Mammary epithelial cell (primary cell): ENCODE measurements at regions of chr7 and their contacts with region 1.

Region 1: GRCh38 chr7:136009488-136010079 is 32.4 kb upstream of the MTPN start:
- DNase-seq: peak; percentile 17
- H3K4me3 ChIP-seq: no peak overlapping the region
- H3K27ac ChIP-seq: no peak overlapping the region
- H3K4me1 ChIP-seq: no peaks in the 10 kb centered on the region
- H3K27me3 ChIP-seq: no peaks in the 10 kb centered on the region
- CTCF ChIP-seq: peak; percentile 56 to 58

Region 2: DNA sequence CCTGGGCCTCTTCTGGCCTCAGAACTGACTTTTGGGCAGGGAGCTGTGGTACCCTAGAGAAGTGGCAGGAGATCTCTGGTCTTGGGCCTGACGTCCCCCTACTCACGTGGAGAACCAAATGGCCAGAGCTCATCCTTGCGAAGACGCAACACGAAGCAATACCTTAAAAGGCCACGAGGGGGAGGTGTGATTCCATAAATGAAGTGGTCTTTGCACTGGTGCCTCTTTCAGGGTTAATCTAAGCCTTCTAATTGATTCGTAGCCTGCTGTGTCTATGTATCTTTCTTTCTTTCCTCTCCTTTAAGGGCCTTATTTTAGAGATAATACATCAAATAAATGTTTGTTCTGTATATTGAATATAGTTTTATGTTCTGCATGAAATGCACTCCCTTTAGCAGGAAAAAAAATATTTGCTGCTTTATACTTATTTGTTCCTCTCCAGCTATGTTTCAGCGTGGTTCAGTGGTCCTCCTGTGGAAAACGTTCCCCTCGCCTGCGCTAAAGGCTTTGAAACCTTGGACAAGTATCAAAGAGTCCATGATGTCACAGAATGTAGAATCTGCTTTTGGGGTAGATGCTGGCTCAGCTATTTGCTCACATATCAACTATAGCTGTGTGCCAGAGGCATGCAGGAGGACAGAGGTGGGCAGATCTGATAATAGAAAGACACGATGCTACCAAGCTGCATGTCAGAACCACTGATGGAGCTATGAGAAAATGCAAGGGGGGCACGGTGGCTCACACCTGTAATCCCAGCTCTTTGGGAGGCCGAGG is 734.9 kb before region 1 on chr7:
- CTCF ChIA-PET with region 1: no interaction called
- dilution Hi-C with region 1: no loop called
- in situ Hi-C with region 1: no loop called
- intact Hi-C with region 1: loop called (anchors 10 kb)
- DNase-seq: peak; percentile 57
- H3K4me3 ChIP-seq: no peak overlapping the region
- H3K27ac ChIP-seq: no peak overlapping the region
- H3K4me1 ChIP-seq: no peaks in the 10 kb centered on the region
- H3K27me3 ChIP-seq: no peaks in the 10 kb centered on the region
- CTCF ChIP-seq: peak; percentile 80 to 82

Region 3: DNA sequence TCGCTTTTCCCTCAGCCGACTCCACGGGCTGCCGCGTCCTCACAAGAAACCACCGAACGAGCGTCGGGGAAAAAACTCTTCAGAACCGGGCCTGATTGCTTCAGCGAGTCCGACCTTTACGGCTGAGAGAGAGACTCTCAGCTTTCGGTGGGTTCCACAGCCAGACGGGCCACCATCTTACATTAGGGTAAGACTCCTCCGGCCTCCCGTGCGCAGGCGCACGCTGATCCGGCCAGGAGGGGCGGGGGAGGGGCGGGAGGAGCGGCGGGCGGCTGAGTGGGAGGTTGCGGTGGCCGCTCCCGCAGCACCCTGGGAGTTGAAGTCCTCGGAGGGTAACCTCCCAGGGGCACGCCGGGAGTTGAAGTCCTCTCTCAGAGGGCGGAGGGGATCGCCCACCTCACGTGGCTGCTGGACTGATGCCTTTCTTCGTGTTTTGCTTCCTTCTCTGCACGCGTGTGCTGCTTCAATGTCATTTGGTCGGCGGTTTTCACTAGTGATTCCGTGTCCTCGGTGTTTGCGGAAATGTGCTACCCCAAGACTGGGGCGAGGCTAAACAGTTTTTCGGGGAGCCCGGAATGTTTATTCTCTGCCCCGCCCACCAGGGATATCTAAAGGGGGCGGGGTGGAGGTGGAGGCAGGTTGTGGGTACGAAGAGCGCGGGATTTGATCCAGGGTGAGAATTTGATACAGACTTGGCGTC is 499.5 kb before region 1 on chr7 and contains the start of gene CNOT4:
- CTCF ChIA-PET with region 1: no interaction called
- dilution Hi-C with region 1: no loop called
- in situ Hi-C with region 1: no loop called
- intact Hi-C with region 1: no loop called
- DNase-seq: peak; percentile 96
- H3K4me3 ChIP-seq: peak within 1 kb of the TSS; percentile 73 to 91 (median 86)
- H3K27ac ChIP-seq: peak within 1 kb of the TSS; percentile 95
- H3K4me1 ChIP-seq: peaks cover 7% of the 10 kb centered on the region
- H3K27me3 ChIP-seq: no peaks in the 10 kb centered on the region
- CTCF ChIP-seq: no peak
- total RNA-seq, gene CNOT4: 12.7 to 23.1 TPM

Region 4: GRCh38 chr7:135620980-135621850 is 388.4 kb before region 1 on chr7:
- CTCF ChIA-PET with region 1: no interaction called
- dilution Hi-C with region 1: no loop called
- in situ Hi-C with region 1: no loop called
- intact Hi-C with region 1: loop called (anchors 5 kb)
- DNase-seq: peak; percentile 73
- H3K4me3 ChIP-seq: no peak overlapping the region
- H3K27ac ChIP-seq: peak overlapping the region; percentile 57
- H3K4me1 ChIP-seq: no peaks in the 10 kb centered on the region
- H3K27me3 ChIP-seq: no peaks in the 10 kb centered on the region
- CTCF ChIP-seq: peak; percentile 80 to 90

Region 5: GRCh38 chr7:135672560-135673359 is 336.8 kb before region 1 on chr7:
- CTCF ChIA-PET with region 1: no interaction called
- dilution Hi-C with region 1: no loop called
- in situ Hi-C with region 1: loop called in 1 of 2 experiments (anchors 5 kb)
- intact Hi-C with region 1: loop called (anchors 1 kb)
- DNase-seq: peak; percentile 61
- H3K4me3 ChIP-seq: no peak overlapping the region
- H3K27ac ChIP-seq: peak overlapping the region; percentile 42
- H3K4me1 ChIP-seq: peaks cover 41% of the 10 kb centered on the region
- H3K27me3 ChIP-seq: no peaks in the 10 kb centered on the region
- CTCF ChIP-seq: peak; percentile 84 to 87

Region 6: DNA sequence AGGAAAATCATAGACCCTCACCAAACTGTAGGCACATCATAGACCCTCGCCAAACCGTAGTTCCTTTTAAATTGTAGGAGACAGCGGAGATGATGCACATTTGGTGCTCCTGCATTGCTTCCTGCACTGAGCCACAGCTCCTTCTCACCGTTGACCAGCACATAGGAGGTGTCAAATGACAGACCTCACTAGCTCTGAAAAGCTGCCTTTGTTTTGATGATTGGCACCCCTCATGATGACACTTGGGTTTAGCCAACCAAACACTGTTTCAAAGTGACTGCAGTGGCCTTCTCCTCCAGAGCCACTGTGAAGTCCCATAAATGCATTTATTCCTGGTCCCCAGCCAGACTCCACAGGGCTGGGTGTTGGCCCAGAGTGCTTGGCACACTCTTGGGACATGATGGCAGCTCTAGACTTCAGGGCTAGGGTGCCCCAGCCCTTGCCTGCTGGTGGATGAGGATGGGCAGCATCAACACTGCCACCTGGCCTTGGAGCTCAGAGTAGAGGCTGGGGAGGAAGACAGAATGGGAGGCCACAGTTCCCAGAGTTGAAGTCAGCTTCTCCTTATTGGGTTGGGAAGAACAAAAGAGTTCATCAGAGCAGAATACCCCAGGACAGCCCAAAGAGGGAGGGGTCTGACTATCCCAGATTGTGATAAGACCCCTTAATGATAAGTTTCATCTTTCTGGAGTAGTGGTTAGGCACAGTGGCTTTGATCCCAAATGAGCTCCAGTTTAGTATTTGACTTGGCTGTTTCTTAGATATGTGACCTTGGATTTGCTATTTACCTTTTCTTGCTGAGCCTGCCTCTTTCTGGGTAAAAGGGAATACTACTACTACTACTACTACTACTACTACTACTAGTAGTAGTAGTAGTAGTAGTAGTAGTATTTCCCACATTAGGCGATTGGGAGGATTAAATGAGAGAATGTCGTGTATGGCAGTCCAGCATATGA is 107.7 kb before region 1 on chr7:
- CTCF ChIA-PET with region 1: no interaction called
- dilution Hi-C with region 1: no loop called
- in situ Hi-C with region 1: no loop called
- intact Hi-C with region 1: no loop called
- DNase-seq: no peak
- H3K4me3 ChIP-seq: no peak overlapping the region
- H3K27ac ChIP-seq: no peak overlapping the region
- H3K4me1 ChIP-seq: no peaks in the 10 kb centered on the region
- H3K27me3 ChIP-seq: no peaks in the 10 kb centered on the region
- CTCF ChIP-seq: no peak

Region 7: DNA sequence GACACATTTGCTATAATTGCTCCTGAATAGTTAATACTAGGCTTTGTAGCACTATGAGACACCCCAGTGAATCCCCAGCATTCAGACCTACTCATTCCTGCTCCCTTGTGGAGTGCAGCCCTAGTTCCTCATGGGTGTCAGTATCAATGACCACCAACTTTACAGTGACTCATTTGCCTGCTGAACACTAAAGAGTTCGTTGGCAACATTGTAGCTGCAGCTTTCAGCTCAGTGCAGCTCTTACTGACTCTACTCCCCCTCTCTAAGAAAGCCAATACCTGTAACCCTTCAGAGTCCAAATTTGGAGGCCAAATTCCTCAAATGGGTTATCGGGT is 94.7 kb after region 1 on chr7:
- CTCF ChIA-PET with region 1: no interaction called
- dilution Hi-C with region 1: no loop called
- in situ Hi-C with region 1: no loop called
- intact Hi-C with region 1: no loop called
- DNase-seq: no peak
- H3K4me3 ChIP-seq: no peak overlapping the region
- H3K27ac ChIP-seq: no peak overlapping the region
- H3K4me1 ChIP-seq: no peaks in the 10 kb centered on the region
- H3K27me3 ChIP-seq: no peaks in the 10 kb centered on the region
- CTCF ChIP-seq: no peak